Dendritic cell treated with granulocyte-macrophage colony-stimulating factor and Interleukin-4, amounts not matched to agents 40 ng/mL and 50 ng/mL, for 4 days (primary cell): ENCODE measurements at regions of chr2 and their contacts with region 1.

Region 1: DNA sequence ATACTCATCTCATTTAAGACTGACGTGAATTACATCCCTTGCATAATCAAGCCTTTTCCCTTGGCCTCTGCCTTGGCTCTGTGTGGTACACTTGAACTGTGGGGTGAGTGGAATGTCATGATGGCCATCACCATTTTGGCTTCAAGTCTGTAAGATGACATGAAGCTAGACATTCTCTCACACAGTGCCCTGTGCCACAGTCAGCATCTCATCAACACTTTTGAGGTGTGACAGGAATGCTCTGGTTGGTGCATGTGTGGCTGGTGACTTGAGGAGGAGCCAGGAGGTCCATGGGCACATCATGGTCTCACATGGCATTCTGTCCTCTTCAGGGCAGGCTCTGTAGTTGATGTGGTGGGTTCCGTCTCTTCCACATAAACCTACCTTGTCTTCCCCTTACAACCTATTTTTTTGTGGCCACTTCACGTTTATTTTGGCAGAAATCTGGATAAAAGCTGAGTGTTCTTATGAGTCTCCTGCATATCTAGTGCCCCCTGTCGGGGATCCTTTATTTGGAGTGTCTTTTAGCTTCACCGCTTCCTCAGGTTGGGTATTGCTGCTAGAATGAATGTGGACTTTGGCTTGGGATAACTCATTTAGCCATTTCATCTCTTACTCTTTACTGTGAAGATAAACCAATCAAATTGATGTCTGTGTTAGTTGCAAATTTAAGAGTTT is 28.1 kb downstream of the MAP4K4 start:
- H3K4me3 Mint-ChIP-seq: no peak overlapping the region
- H3K27ac Mint-ChIP-seq: no peak overlapping the region
- H3K4me1 Mint-ChIP-seq: peaks cover 51% of the 10 kb centered on the region
- H3K27me3 Mint-ChIP-seq: no peaks in the 10 kb centered on the region

Region 2: GRCh38 chr2:101419096-101419663 is 306.5 kb before region 1 on chr2:
- intact Hi-C with region 1: loop called (anchors 10 kb)
- H3K4me3 Mint-ChIP-seq: no peak overlapping the region
- H3K27ac Mint-ChIP-seq: no peak overlapping the region
- H3K4me1 Mint-ChIP-seq: peaks cover 5% of the 10 kb centered on the region
- H3K27me3 Mint-ChIP-seq: no peaks in the 10 kb centered on the region

Region 3: DNA sequence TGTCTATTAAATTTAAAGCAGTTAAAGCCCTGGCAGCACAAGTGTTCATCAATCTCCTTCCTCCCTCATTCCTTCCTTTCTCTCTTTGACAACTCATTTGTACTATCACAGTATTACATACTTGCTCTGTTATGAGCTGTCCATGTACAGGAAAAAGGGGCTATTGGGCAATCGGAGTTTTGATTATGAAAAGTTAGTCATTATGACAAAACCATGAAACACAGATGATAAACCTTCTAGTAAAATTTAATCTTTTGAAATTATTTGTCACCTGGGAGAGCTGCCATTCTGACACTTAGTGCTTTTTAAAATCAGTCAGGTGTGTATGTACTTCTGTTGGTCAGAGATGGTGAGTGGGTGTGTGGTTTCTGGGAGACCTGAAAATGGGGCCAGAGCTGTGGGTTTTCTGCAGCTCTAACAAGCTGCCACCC is 11.2 kb after region 1 on chr2:
- intact Hi-C with region 1: no loop called
- H3K4me3 Mint-ChIP-seq: no peak overlapping the region
- H3K27ac Mint-ChIP-seq: no peak overlapping the region
- H3K4me1 Mint-ChIP-seq: peaks cover 76% of the 10 kb centered on the region
- H3K27me3 Mint-ChIP-seq: no peaks in the 10 kb centered on the region